ENCODE measurements at regions of chr3 and their contacts with region 1.

Region 1: DNA sequence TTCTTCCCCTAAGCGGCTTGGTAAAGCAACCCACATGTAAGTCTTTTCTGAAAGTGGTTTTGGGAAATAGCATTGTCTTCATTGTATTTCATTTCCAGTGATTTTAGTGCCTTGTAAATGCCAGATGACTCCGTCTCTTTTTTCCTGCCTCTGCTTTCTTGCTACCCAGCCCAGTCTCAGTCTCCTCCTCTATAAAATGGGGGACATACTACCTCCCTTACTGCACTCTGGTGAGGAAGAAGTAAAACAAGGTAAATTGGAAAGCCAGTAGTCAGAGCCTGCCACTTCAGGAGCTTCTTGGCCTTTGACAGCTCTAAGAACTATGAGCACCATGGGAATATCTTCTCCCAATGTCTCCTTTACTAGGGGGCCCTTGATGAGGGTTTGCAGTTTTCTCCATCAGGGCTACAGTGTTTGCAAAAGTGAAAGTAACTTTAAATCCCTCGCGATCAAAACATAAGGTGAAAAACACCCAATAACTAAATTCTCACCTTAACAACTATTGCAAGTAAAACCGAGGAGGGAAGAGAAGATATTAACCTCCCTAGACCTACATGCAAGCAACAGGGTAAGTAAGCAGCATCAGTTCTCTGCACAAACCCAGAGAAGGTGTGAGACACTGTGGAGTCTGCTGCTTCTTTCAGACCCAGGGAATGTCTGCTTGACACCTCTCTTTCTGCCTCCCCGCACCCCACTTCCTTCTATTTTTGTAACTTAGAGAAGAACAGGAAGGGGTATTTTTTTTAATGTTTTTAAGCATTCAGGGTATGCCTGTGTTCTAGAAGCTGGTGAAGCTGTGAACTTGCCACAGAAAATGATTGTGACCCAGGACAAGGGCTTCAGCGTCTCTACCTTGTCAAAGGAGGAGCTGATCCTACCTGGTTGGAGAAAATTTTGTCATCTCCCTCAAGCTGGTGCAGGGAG is 159.1 kb upstream of the EOMES start:
- DNase-seq: peak; percentile 55 to 71 (median 63)
- H3K4me3 ChIP-seq: peak overlapping the region; percentile 42 to 57
- H3K4me3 Mint-ChIP-seq: peak overlapping the region; percentile 79 to 96 (median 90)
- H3K27ac ChIP-seq: peak overlapping the region; percentile 60
- H3K27ac Mint-ChIP-seq: peak overlapping the region; percentile 82 to 95 (median 93)
- H3K4me1 ChIP-seq: peaks cover 60% of the 10 kb centered on the region
- H3K4me1 Mint-ChIP-seq: peaks cover 45 to 67% (median 59%) of the 10 kb centered on the region in 4 donors
- H3K27me3 ChIP-seq: no peaks in the 10 kb centered on the region
- H3K27me3 Mint-ChIP-seq: no peaks in the 10 kb centered on the region

Region 2: GRCh38 chr3:27861046-27862036 is 19.9 kb before region 1 on chr3:
- CTCF ChIA-PET with region 1: interaction called, 7 read pairs
- POLR2A ChIA-PET with region 1: interaction called, 22 read pairs
- intact Hi-C with region 1: no loop called
- DNase-seq: peak in 4 of 5 donors; percentile 34 to 46 (median 42)
- H3K4me3 ChIP-seq: peak overlapping the region in 1 of 2 donors; percentile 2
- H3K4me3 Mint-ChIP-seq: peak overlapping the region in 7 of 8 donors; percentile 27 to 67 (median 50)
- H3K27ac ChIP-seq: peak overlapping the region; percentile 32
- H3K27ac Mint-ChIP-seq: peak overlapping the region; percentile 74 to 93 (median 88)
- H3K4me1 ChIP-seq: peaks cover 41% of the 10 kb centered on the region
- H3K4me1 Mint-ChIP-seq: peaks cover 32 to 56% (median 47%) of the 10 kb centered on the region in 4 donors
- H3K27me3 ChIP-seq: no peaks in the 10 kb centered on the region
- H3K27me3 Mint-ChIP-seq: no peaks in the 10 kb centered on the region

Region 3: GRCh38 chr3:27903446-27903845 is 22.2 kb after region 1 on chr3:
- CTCF ChIA-PET with region 1: interaction called, 3 read pairs
- POLR2A ChIA-PET with region 1: interaction called, 5 read pairs
- intact Hi-C with region 1: loop called (anchors 1 kb)
- DNase-seq: peak in 3 of 5 donors; percentile 9 to 19 (median 18)
- H3K4me3 ChIP-seq: no peak overlapping the region
- H3K4me3 Mint-ChIP-seq: peak overlapping the region in 7 of 8 donors; percentile 60 to 87 (median 71)
- H3K27ac ChIP-seq: no peak overlapping the region
- H3K27ac Mint-ChIP-seq: peak overlapping the region; percentile 45 to 90 (median 82)
- H3K4me1 ChIP-seq: peaks cover 31% of the 10 kb centered on the region
- H3K4me1 Mint-ChIP-seq: peaks cover 31 to 62% (median 39%) of the 10 kb centered on the region in 4 donors
- H3K27me3 ChIP-seq: no peaks in the 10 kb centered on the region
- H3K27me3 Mint-ChIP-seq: no peaks in the 10 kb centered on the region